ENCODE measurements at regions of chr10 and their contacts with region 1.

Region 1: GRCh38 chr10:4849555-4850242 is 23.7 kb downstream of the AKR1E2 start:
- DNase-seq: peak; percentile 87 to 88
- H3K4me3 ChIP-seq: no peak overlapping the region
- H3K27ac ChIP-seq: peak overlapping the region in 1 of 2 donors; percentile 50
- H3K4me1 ChIP-seq: no peaks in the 10 kb centered on the region
- H3K27me3 ChIP-seq: no peaks in the 10 kb centered on the region
- CTCF ChIP-seq: peak; percentile 96 to 99 (median 97)
- POLR2A ChIP-seq: no peak

Region 2: DNA sequence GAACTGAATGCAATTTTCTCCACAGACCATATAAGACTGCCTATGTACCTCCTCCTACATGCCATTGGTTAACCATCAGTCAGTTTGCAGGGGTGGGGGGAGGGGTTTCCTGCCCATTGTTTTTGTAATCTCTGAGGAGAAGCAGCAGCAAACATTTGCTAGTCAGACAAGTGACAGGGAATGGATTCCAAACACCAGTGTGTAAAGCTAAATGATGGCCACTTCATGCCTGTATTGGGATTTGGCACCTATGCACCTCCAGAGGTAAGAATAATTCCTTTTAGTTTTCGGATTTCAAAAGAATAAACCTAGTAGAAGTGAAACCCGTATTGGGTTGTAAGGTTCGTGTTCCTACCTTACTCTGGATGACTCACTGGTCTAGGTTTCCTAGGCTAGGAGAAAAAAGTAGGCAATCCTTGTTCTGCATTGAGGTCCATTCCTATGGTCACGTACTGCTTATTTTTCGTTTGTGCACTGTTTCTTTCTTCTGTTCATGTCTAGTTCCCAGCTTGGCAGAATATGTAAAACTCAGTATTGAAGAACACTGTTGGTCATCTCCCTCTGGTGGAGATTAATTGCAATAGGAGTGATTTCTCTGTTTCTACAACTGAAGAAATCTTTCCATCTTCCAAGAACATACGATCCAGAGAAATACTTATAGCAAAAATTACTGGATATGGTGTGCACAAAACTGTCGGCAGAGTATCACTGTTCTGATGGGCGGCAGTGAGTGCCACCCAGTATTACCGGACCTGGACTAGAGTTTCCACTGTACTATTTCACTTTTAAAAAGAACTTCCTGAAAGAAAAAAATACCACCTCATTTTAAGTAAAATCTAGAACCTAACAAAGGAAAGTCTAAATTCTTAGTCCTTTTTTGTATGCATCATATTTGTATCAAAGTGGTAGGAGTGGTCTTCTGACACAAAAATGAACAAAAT is 244.8 kb after region 1 on chr10 and contains the start of gene AKR1C3:
- intact Hi-C with region 1: loop called (anchors 5 kb)
- DNase-seq: no peak
- H3K4me3 ChIP-seq: peak within 1 kb of the TSS; percentile 36 to 49
- H3K27ac ChIP-seq: peak within 1 kb of the TSS; percentile 51 to 83
- H3K4me1 ChIP-seq: no peaks in the 10 kb centered on the region
- H3K27me3 ChIP-seq: no peaks in the 10 kb centered on the region
- CTCF ChIP-seq: peak; percentile 53 to 78 (median 76)
- POLR2A ChIP-seq: no peak
- total RNA-seq, gene AKR1C3: 6.0 to 35.6 (median 16.7) TPM

Region 3: DNA sequence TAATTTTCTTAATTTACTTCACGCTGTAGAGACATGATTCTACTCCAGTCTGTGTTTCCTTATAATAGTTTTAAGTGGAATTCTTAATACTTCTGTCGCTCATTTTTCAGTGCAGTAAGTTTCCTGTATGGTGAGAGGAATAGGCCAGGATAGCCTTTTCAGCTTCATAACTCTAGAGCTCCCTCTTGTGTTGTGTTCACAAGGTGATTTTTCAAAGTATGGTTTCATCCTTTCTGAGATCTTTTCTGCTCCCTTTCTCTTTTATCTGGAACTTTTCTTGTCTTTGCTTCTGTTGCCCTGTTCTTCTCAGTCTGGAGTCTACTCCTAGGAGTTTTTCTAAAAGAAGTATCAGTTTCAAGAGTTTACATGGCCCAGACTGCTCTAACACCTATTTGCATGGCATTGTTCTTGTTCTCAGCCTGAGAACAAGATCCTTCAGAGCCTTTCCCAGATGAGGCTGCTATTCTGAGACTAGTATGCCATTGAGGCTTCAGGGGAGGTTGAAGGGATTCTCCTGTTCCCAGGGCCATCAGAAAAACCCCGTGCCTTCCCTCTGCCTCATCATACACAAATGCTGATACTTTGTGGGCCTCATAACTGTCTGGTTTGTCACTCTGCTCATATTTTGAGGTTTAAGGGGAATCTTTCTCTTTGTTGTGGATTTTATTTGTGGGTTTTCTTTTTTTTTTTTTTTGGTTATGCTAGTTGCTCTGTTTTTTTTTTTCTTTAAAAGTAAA is 584.5 kb after region 1 on chr10:
- intact Hi-C with region 1: loop called (anchors 10 kb)
- DNase-seq: no peak
- H3K4me3 ChIP-seq: no peak overlapping the region
- H3K27ac ChIP-seq: no peak overlapping the region
- H3K4me1 ChIP-seq: no peaks in the 10 kb centered on the region
- H3K27me3 ChIP-seq: no peaks in the 10 kb centered on the region
- CTCF ChIP-seq: peak; percentile 28 to 57 (median 47)
- POLR2A ChIP-seq: no peak

Measured in uterus (tissue), 4 donors.